ENCODE measurements at regions of chr12 and their contacts with region 1.

Region 1: DNA sequence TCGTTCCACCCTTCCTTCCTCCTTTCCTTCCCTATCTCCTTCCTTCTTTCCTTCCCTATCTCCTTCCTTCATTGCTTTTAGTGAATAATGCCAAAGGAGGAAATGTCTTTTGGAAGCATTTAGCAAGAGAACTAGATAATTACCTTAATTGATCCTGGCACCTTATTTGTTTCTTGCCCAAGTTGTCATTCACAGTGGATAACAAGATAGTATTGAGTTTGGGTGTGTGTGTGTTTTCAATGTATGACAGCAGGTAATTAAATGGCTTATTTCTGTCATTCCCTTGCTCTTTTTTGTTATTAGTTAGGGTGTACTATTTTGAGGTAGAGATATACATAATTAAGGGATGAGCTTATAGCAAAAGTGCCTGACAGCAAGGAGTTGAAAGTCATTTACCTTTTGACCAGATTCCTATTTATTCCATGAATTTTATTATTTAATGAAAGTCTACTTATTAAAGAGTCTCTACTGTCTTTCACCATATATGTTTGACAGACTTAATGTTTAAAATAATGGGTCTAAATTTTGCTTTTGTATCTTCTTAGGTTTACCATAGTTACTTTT is 30.2 kb downstream of the EID3 start:
- DNase-seq: no peak
- H3K4me3 ChIP-seq: no peak overlapping the region
- H3K27ac ChIP-seq: no peak overlapping the region
- H3K4me1 ChIP-seq: no peaks in the 10 kb centered on the region
- H3K27me3 ChIP-seq: no peaks in the 10 kb centered on the region
- CTCF ChIP-seq: no peak
- POLR2A ChIP-seq: no peak

Region 2: DNA sequence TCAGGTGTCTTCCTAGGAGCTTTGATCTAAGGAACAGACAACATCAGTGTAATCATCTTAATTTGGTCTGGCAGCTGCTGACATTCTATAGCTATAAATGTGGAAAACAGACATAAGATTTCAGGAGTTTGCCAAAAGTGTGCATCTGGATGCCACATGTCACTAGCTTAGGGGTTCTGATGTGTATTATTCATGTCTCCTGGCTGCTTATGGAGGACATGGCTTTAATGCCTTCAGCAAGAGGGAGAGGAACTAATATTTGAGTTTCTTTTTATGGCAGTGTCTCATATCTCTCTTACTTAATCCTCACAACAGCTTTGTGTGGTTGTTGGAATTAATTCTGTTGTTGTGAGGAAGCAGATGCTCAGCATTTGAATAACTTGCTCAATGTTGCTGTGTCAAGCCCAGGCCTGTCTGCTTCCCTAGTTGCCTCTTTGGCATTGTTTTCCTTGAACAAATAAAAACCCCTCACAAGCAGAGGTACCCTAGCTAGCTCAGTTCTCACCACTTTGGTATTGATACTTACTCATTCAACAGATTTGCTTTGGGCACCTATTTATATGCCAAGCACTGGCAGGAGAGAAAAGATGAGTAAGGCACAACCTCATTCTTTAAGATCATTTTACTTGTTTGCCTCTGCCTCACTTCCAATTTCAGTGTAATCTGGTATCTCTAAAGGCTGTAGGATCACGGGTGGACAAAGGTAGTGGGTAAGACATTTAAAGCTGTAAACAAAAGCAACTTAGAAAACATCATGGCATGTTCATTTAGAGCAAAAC is 70.0 kb before region 1 on chr12:
- CTCF ChIA-PET with region 1: no interaction called
- POLR2A ChIA-PET with region 1: interaction called, 10 read pairs
- dilution Hi-C with region 1: no loop called
- intact Hi-C with region 1: no loop called
- DNase-seq: no peak
- H3K4me3 ChIP-seq: no peak overlapping the region
- H3K27ac ChIP-seq: no peak overlapping the region
- H3K4me1 ChIP-seq: no peaks in the 10 kb centered on the region
- H3K27me3 ChIP-seq: no peaks in the 10 kb centered on the region
- CTCF ChIP-seq: no peak
- POLR2A ChIP-seq: no peak

Region 3: GRCh38 chr12:104439137-104439536 is 105.4 kb after region 1 on chr12:
- CTCF ChIA-PET with region 1: no interaction called
- POLR2A ChIA-PET with region 1: no interaction called
- dilution Hi-C with region 1: no loop called
- intact Hi-C with region 1: no loop called
- DNase-seq: no peak
- H3K4me3 ChIP-seq: no peak overlapping the region
- H3K27ac ChIP-seq: no peak overlapping the region
- H3K4me1 ChIP-seq: no peaks in the 10 kb centered on the region
- H3K27me3 ChIP-seq: peaks cover 0 to 10% of the 10 kb centered on the region in 2 experiments
- CTCF ChIP-seq: no peak
- POLR2A ChIP-seq: no peak

Measured in endothelial cell of umbilical vein (primary cell).